Activated naive CD8-positive, alpha-beta T cell treated with anti-CD3 and anti-CD28 coated beads, Interleukin-2, amount 10 ng/mL, durations not matched to agents 7 days and 5 days (primary cell): ENCODE measurements at regions of chr2 and their contacts with region 1.

Region 1: GRCh38 chr2:160406591-160407392 is 86.8 kb downstream of the RBMS1 start:
- DNase-seq: peak; percentile 75
- ATAC-seq: peak; percentile 74
- H3K4me3 Mint-ChIP-seq: peak overlapping the region; percentile 97
- H3K27ac Mint-ChIP-seq: peak overlapping the region; percentile 88
- H3K4me1 Mint-ChIP-seq: peaks cover 74% of the 10 kb centered on the region
- H3K27me3 Mint-ChIP-seq: no peaks in the 10 kb centered on the region

Region 2: DNA sequence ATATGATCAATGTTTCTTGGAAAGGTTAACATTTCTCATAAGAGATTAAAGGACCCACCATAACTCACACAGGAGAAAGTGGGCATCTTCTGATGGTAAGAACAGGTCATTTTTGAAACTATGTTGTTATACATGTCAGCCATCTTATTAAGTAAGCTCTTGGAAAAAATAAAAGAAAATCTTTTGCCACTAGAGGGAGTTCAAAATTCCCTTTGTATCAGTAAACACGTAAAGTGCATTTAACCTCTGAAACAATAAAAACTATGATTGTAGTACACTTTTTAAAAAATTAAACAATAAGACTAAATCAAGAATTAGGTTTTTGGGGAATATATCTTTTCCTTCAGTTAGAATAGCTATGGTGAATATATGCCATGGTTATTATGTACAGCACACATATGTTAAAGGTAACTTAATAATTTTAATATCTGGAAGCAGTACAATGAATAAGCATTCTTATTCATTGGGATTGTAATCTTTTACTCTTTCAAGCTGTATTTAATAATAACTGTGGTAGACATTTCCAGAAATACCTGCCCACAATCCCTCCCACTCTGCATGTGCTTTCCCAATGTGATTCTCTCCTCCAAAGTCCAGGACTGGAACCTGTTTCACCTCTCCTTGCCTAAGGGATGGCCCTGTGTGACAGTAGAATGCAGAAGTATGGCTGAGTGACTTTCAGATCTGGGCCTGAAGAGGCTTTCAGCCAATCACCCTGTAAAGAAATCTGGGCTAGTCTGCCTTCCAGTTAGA is 22.6 kb after region 1 on chr2:
- POLR2A ChIA-PET with region 1: interaction called, 23 read pairs
- DNase-seq: no peak
- ATAC-seq: peak; percentile 59
- H3K4me3 Mint-ChIP-seq: peak overlapping the region; percentile 66
- H3K27ac Mint-ChIP-seq: peak overlapping the region; percentile 85
- H3K4me1 Mint-ChIP-seq: peaks cover 56% of the 10 kb centered on the region
- H3K27me3 Mint-ChIP-seq: peaks cover 2% of the 10 kb centered on the region

Region 3: GRCh38 chr2:160493227-160494028 is 86.6 kb after region 1 on chr2 and contains the start of gene RBMS1:
- POLR2A ChIA-PET with region 1: interaction called, 19 read pairs
- DNase-seq: peak; percentile 73
- ATAC-seq: peak; percentile 41
- H3K4me3 Mint-ChIP-seq: peak within 1 kb of the TSS; percentile 93
- H3K27ac Mint-ChIP-seq: peak within 1 kb of the TSS; percentile 96
- H3K4me1 Mint-ChIP-seq: peaks cover 27% of the 10 kb centered on the region
- H3K27me3 Mint-ChIP-seq: peaks cover 9% of the 10 kb centered on the region
- total RNA-seq, gene RBMS1: 87.9 to 90.6 TPM